Upper lobe of right lung (tissue), 1 donor: ENCODE measurements at regions of chr4 and their contacts with region 1.

Region 1: GRCh38 chr4:153750197-153750817 is 9.5 kb downstream of the RNF175 start:
- DNase-seq: no peak
- ATAC-seq: peak; percentile 95
- H3K4me3 ChIP-seq: no peak overlapping the region
- H3K27ac ChIP-seq: no peak overlapping the region
- H3K4me1 ChIP-seq: no peaks in the 10 kb centered on the region
- H3K27me3 ChIP-seq: no peaks in the 10 kb centered on the region
- CTCF ChIP-seq: peak; percentile 72

Region 2: DNA sequence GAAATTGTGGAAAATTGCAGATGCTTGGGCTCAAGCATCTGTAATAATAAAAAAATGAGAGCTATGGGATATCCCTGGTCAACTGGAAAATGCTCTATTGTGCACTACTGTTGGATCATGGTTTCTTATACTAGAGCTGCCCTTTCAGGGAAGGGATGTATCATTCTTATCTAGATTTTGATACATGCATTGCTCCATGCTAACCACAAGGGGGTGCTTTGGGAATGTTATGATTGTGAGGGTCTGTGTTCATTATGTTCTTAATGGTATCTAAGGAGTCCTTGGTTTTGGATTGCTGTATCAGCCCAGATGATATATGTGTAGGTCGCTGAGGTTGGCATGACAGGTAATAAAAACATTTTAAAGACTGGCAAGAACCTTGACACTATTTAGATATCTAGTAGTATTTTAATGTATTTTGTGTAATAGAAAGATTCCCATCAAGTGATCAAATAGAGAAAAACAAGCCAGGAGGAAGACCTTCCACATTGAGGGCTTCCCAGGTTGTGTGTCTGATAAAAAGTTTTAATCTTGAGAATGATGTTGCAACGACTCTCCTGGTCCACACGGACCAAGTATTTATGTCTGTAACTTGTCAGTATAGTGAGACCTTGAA is 115.5 kb before region 1 on chr4:
- intact Hi-C with region 1: loop called (anchors 10 kb)
- DNase-seq: no peak
- ATAC-seq: peak; percentile 83
- H3K4me3 ChIP-seq: no peak overlapping the region
- H3K27ac ChIP-seq: no peak overlapping the region
- H3K4me1 ChIP-seq: no peaks in the 10 kb centered on the region
- H3K27me3 ChIP-seq: no peaks in the 10 kb centered on the region
- CTCF ChIP-seq: peak; percentile 69

Region 3: GRCh38 chr4:153901220-153901619 is 150.9 kb after region 1 on chr4:
- intact Hi-C with region 1: no loop called
- DNase-seq: no peak
- ATAC-seq: no peak
- H3K4me3 ChIP-seq: no peak overlapping the region
- H3K27ac ChIP-seq: no peak overlapping the region
- H3K4me1 ChIP-seq: no peaks in the 10 kb centered on the region
- H3K27me3 ChIP-seq: no peaks in the 10 kb centered on the region
- CTCF ChIP-seq: no peak